Activated naive CD8-positive, alpha-beta T cell treated with anti-CD3 and anti-CD28 coated beads, Interleukin-2, amount 10 ng/mL, durations not matched to agents 7 days and 5 days (primary cell): ENCODE measurements at regions of chr1 and their contacts with region 1.

Region 1: GRCh38 chr1:110787328-110788071 is 85.4 kb upstream of the CD53 start:
- DNase-seq: peak; percentile 74
- ATAC-seq: peak; percentile 82
- H3K4me3 Mint-ChIP-seq: peak overlapping the region; percentile 80
- H3K27ac Mint-ChIP-seq: peak overlapping the region; percentile 94
- H3K4me1 Mint-ChIP-seq: peaks cover 44% of the 10 kb centered on the region
- H3K27me3 Mint-ChIP-seq: no peaks in the 10 kb centered on the region

Region 2: GRCh38 chr1:110619412-110620249 is 167.9 kb before region 1 on chr1:
- POLR2A ChIA-PET with region 1: interaction called, 14 read pairs
- DNase-seq: peak; percentile 97
- ATAC-seq: peak; percentile 88
- H3K4me3 Mint-ChIP-seq: peak overlapping the region; percentile 86
- H3K27ac Mint-ChIP-seq: peak overlapping the region; percentile 90
- H3K4me1 Mint-ChIP-seq: peaks cover 27% of the 10 kb centered on the region
- H3K27me3 Mint-ChIP-seq: peaks cover 3% of the 10 kb centered on the region

Region 3: GRCh38 chr1:110674337-110675059 is 113.0 kb before region 1 on chr1 and contains the start of gene KCNA3:
- POLR2A ChIA-PET with region 1: interaction called, 28 read pairs
- DNase-seq: peak; percentile 82
- ATAC-seq: peak; percentile 35
- H3K4me3 Mint-ChIP-seq: peak within 1 kb of the TSS; percentile 100
- H3K27ac Mint-ChIP-seq: peak within 1 kb of the TSS; percentile 99
- H3K4me1 Mint-ChIP-seq: peaks cover 31% of the 10 kb centered on the region
- H3K27me3 Mint-ChIP-seq: no peaks in the 10 kb centered on the region
- total RNA-seq, gene KCNA3: 68.4 to 74.0 TPM

Region 4: GRCh38 chr1:110816930-110817329 is 29.4 kb after region 1 on chr1:
- POLR2A ChIA-PET with region 1: no interaction called
- DNase-seq: no peak
- ATAC-seq: no peak
- H3K4me3 Mint-ChIP-seq: no peak overlapping the region
- H3K27ac Mint-ChIP-seq: no peak overlapping the region
- H3K4me1 Mint-ChIP-seq: no peaks in the 10 kb centered on the region
- H3K27me3 Mint-ChIP-seq: peaks cover 15% of the 10 kb centered on the region

Region 5: DNA sequence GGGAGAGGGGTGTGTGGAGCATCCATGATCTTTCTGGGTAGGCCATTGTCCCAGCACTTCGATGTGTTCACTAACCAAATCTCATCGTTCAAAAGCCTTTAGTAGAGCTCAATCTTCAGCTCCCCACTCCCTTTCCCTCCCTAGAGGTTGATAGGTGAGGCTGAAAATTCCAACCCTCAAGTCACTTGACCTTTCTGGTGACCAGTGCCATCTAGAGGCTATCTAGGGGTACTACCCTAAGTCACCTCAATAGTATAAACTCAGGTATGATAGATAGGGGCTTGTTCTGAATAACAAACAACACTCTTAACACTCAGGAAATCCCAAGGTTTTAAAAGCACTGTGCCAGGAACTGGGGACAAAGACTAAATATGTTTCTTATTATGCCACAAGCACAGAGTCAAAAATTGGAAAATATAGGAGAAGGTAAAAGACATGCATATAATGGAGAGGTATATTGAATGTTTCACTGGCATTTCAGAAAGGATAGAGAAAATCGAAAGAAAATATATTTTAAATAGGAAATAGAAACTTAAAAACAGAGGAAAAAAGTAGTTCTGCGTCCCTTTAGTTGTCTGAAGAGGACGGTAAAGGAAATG is 42.6 kb after region 1 on chr1:
- POLR2A ChIA-PET with region 1: interaction called, 15 read pairs
- DNase-seq: no peak
- ATAC-seq: peak; percentile 71
- H3K4me3 Mint-ChIP-seq: no peak overlapping the region
- H3K27ac Mint-ChIP-seq: no peak overlapping the region
- H3K4me1 Mint-ChIP-seq: peaks cover 5% of the 10 kb centered on the region
- H3K27me3 Mint-ChIP-seq: peaks cover 2% of the 10 kb centered on the region

Region 6: GRCh38 chr1:110879758-110880606 is 92.5 kb after region 1 on chr1:
- POLR2A ChIA-PET with region 1: interaction called, 90 read pairs
- DNase-seq: no peak
- ATAC-seq: peak; percentile 57
- H3K4me3 Mint-ChIP-seq: peak overlapping the region; percentile 86
- H3K27ac Mint-ChIP-seq: peak overlapping the region; percentile 98
- H3K4me1 Mint-ChIP-seq: peaks cover 61% of the 10 kb centered on the region
- H3K27me3 Mint-ChIP-seq: no peaks in the 10 kb centered on the region

Region 7: GRCh38 chr1:110963691-110964399 is 176.3 kb after region 1 on chr1 and contains the start of gene LRIF1:
- POLR2A ChIA-PET with region 1: interaction called, 18 read pairs
- DNase-seq: peak; percentile 100
- ATAC-seq: peak; percentile 99
- H3K4me3 Mint-ChIP-seq: peak within 1 kb of the TSS; percentile 97
- H3K27ac Mint-ChIP-seq: peak within 1 kb of the TSS; percentile 99
- H3K4me1 Mint-ChIP-seq: peaks cover 28% of the 10 kb centered on the region
- H3K27me3 Mint-ChIP-seq: peaks cover 11% of the 10 kb centered on the region
- total RNA-seq, gene LRIF1: 25.2 to 26.1 TPM